ENCODE measurements at regions of chr11 and their contacts with region 1.

Region 1: GRCh38 chr11:2901854-2902783 is 16.5 kb upstream of the CDKN1C start:
- DNase-seq: peak; percentile 97
- H3K4me3 Mint-ChIP-seq: peak overlapping the region; percentile 74
- H3K27ac Mint-ChIP-seq: peak overlapping the region; percentile 72
- H3K4me1 Mint-ChIP-seq: peaks cover 49% of the 10 kb centered on the region
- H3K27me3 Mint-ChIP-seq: no peaks in the 10 kb centered on the region

Region 2: DNA sequence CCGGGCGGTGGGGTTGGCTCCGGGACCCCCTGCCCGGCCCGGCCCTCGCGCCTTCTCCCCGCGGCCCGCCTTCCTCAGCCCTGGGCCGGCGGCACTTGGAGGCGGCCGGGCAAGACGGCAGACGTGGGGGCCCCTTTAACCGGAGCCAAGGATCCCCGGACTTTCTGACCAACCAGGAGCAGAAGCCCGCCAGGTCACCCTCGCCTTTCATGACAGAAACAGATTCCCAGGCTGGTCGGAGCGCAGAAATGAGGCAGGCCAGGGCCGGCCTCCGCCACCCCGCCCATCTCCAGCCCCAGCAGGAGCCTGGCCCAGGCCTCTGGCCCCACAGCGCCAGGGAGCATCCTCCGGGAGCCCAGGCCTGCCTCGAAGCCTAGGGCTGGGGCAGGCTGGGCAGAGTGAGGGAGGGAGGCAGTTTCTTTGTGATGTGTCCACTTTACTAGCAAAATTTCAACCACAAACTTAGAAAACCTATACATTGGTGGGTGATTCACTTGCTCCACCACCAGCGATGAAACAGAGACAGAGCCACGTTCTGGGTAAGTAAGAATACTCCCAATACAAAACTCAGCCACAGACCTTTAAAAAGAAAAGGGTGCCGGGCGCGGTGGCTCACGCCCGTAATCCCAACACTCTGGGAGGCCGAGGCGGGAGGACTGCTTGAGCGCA is 39.0 kb before region 1 on chr11:
- CTCF ChIA-PET with region 1: no interaction called
- POLR2A ChIA-PET with region 1: no interaction called
- DNase-seq: no peak
- H3K4me3 Mint-ChIP-seq: no peak overlapping the region
- H3K27ac Mint-ChIP-seq: no peak overlapping the region
- H3K4me1 Mint-ChIP-seq: peaks cover 2% of the 10 kb centered on the region
- H3K27me3 Mint-ChIP-seq: peaks cover 33% of the 10 kb centered on the region

Region 3: GRCh38 chr11:2885676-2886081 is 16.4 kb before region 1 on chr11 and contains the start of gene CDKN1C:
- CTCF ChIA-PET with region 1: interaction called, 11 read pairs
- POLR2A ChIA-PET with region 1: interaction called, 5 read pairs
- DNase-seq: peak; percentile 84
- H3K4me3 Mint-ChIP-seq: peak within 1 kb of the TSS; percentile 84
- H3K27ac Mint-ChIP-seq: no peak within 1 kb of the TSS
- H3K4me1 Mint-ChIP-seq: peaks cover 11% of the 10 kb centered on the region
- H3K27me3 Mint-ChIP-seq: peaks cover 38% of the 10 kb centered on the region
- total RNA-seq, gene CDKN1C: 0.55 to 0.60 TPM

Region 4: GRCh38 chr11:2930704-2931428 is 28.7 kb after region 1 on chr11:
- CTCF ChIA-PET with region 1: no interaction called
- POLR2A ChIA-PET with region 1: interaction called, 12 read pairs
- DNase-seq: peak; percentile 66
- H3K4me3 Mint-ChIP-seq: peak overlapping the region; percentile 73
- H3K27ac Mint-ChIP-seq: peak overlapping the region; percentile 57
- H3K4me1 Mint-ChIP-seq: peaks cover 43% of the 10 kb centered on the region
- H3K27me3 Mint-ChIP-seq: peaks cover 22% of the 10 kb centered on the region

Region 5: GRCh38 chr11:2940559-2940929 is 38.4 kb after region 1 on chr11:
- CTCF ChIA-PET with region 1: no interaction called
- POLR2A ChIA-PET with region 1: interaction called, 12 read pairs
- DNase-seq: peak; percentile 66
- H3K4me3 Mint-ChIP-seq: no peak overlapping the region
- H3K27ac Mint-ChIP-seq: no peak overlapping the region
- H3K4me1 Mint-ChIP-seq: peaks cover 28% of the 10 kb centered on the region
- H3K27me3 Mint-ChIP-seq: no peaks in the 10 kb centered on the region

Measured in activated CD4-positive, alpha-beta memory T cell treated with anti-CD3 and anti-CD28 coated beads, Interleukin-2, amount 10 ng/mL, durations not matched to agents 7 days and 5 days (primary cell).